ENCODE measurements at regions of chr13 and their contacts with region 1.

Region 1: GRCh38 chr13:39676315-39676876 is 20.9 kb downstream of the COG6 start:
- DNase-seq: peak in 1 of 2 donors; percentile 36
- ATAC-seq: no peak
- H3K4me3 ChIP-seq: no peak overlapping the region
- H3K27ac ChIP-seq: no peak overlapping the region
- H3K4me1 ChIP-seq: peaks cover 0 to 4% (median 0%) of the 10 kb centered on the region in 9 donors
- H3K27me3 ChIP-seq: no peaks in the 10 kb centered on the region
- CTCF ChIP-seq: peak; percentile 14 to 72 (median 56)

Region 2: DNA sequence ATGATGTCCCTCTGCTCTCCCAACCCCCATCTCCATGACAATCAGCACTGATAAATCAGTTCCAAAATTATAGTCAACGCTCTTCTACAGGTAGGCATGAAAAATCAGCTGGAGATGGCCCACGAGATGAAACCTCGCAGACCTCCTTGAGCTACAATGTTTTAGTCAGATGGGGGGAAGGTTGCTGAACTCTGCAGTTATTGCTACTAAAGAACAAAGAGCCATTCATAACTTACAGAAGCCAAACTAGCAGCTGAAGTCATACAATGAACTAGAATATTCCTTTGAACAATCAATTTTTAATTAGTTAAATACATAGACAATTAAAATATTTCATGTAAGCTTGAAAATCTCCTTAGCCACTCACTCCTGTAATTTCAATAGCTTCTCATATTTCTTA is 458.9 kb before region 1 on chr13:
- intact Hi-C with region 1: no loop called
- DNase-seq: no peak
- ATAC-seq: no peak
- H3K4me3 ChIP-seq: no peak overlapping the region
- H3K27ac ChIP-seq: no peak overlapping the region
- H3K4me1 ChIP-seq: no peaks in the 10 kb centered on the region
- H3K27me3 ChIP-seq: no peaks in the 10 kb centered on the region
- CTCF ChIP-seq: no peak

Region 3: DNA sequence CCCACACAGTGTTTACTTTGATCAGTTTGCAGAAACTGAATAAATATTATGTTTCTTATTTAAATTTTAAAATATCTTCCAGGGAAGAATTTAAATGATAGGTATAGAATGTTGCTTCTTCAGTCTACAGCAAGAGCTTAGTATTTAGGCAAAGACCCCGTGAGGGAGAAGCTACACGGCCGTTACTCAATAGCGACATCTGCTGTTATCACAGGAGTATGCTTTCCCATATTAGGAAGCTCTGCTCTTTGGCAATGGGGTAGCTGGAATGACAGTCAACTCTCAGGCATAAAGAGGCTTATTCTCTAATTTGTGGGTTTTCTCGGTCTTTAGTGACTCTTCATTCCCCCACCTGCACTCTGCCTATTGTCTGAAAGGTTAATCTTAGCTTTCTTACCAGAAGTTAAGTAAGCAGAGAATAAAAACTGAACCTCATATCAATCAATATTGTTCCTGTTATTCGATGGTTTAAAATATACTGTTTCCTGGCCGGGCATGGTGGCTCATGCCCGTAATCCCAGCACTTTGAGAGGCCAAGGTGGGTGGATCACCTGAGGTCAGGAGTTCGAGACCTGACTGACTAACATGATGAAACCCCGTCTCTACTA is 60.2 kb before region 1 on chr13:
- intact Hi-C with region 1: loop called in 1 of 10 experiments (anchors 2 kb)
- DNase-seq: peak in 1 of 2 donors; percentile 70
- ATAC-seq: peak; percentile 68 to 87 (median 82)
- H3K4me3 ChIP-seq: no peak overlapping the region
- H3K27ac ChIP-seq: no peak overlapping the region
- H3K4me1 ChIP-seq: peaks cover 0 to 12% (median 0%) of the 10 kb centered on the region in 9 donors
- H3K27me3 ChIP-seq: no peaks in the 10 kb centered on the region
- CTCF ChIP-seq: peak; percentile 81 to 96 (median 92)

Measured in heart right ventricle (tissue), 16 donors.